ENCODE measurements at regions of chr7 and their contacts with region 1.

Region 1: GRCh38 chr7:28595076-28595475 is 182.8 kb downstream of the CREB5 start:
- DNase-seq: no peak
- CTCF ChIP-seq: no peak

Region 2: DNA sequence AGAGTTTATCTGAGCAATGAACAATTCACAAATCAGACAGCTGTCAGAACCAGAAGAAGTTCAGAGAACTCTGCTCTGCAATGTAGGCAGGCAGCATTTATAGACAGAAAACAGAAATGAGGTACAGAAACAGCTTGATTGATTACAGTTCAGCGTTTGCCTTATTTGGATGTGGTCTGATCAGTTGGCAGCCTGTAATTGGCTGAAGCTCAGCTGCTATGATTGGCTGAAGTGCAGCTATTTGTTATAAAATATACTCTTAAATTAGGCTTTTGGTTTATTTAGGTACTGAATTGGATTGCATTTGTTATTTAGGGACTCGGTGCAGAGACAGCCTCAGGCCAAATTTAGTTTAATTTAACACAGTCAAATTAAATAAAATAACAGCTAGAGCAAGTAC is 328.7 kb before region 1 on chr7:
- CTCF ChIA-PET with region 1: no interaction called
- POLR2A ChIA-PET with region 1: no interaction called
- DNase-seq: no peak
- CTCF ChIP-seq: no peak

Region 3: GRCh38 chr7:28608731-28609130 is 13.7 kb after region 1 on chr7:
- CTCF ChIA-PET with region 1: interaction called, 20 read pairs
- POLR2A ChIA-PET with region 1: no interaction called
- DNase-seq: no peak
- CTCF ChIP-seq: no peak

Region 4: DNA sequence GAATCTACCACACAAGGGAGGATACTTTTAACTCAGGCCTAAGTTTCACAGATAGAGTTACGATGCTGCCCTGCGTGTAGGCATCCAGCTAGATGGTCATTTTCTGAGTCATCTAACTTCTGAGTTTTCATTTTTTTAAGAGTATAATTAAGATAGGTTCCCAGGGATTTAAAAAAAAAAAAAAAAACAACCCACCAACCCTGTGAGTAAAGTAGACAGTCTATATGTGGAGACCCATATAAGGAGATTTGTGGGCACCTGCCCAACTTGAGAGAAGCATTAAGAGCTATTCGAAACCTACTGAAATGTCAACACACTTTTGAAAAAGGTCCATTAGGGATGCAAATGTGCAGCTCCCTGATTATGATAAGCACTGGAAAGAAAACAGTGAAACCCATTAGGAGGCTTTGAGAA is 105.7 kb after region 1 on chr7:
- CTCF ChIA-PET with region 1: no interaction called
- POLR2A ChIA-PET with region 1: no interaction called
- DNase-seq: no peak
- CTCF ChIP-seq: no peak